ENCODE measurements at regions of chr4 and their contacts with region 1.

Region 1: DNA sequence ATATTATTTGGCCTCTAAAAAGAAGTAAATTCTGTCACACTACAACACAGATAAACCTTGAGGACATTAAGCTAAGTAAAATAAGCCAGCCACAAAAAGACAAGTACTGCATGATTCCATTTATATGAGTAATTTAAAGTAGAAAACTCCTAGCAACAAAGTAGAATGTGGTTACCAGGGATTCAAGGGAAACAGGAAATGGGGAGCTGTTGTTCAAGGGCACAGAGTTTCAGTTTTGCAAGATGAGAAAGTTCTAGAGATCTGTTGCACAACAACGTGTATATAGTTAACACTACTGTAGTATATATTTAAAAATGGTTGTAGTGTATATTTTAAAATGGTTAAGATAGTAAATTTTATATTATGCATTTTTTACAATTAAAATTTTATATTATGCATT is 25.4 kb downstream of the SEC31A start:
- DNase-seq: peak in 2 of 9 experiments; percentile 16 to 55
- ATAC-seq: no peak
- H3K4me3 ChIP-seq: no peak overlapping the region
- H3K4me3 Mint-ChIP-seq: peak overlapping the region; percentile 17
- H3K27ac ChIP-seq: peak overlapping the region in 1 of 2 experiments; percentile 37
- H3K27ac Mint-ChIP-seq: peak overlapping the region; percentile 62
- H3K4me1 ChIP-seq: peaks cover 6% of the 10 kb centered on the region
- H3K4me1 Mint-ChIP-seq: peaks cover 23% of the 10 kb centered on the region
- H3K27me3 ChIP-seq: no peaks in the 10 kb centered on the region
- H3K27me3 Mint-ChIP-seq: no peaks in the 10 kb centered on the region
- CTCF ChIP-seq: no peak

Region 2: GRCh38 chr4:82638479-82638878 is 227.1 kb before region 1 on chr4:
- CTCF ChIA-PET with region 1: no interaction called
- POLR2A ChIA-PET with region 1: no interaction called
- intact Hi-C with region 1: no loop called
- DNase-seq: no peak
- ATAC-seq: no peak
- H3K4me3 ChIP-seq: no peak overlapping the region
- H3K4me3 Mint-ChIP-seq: no peak overlapping the region
- H3K27ac ChIP-seq: no peak overlapping the region
- H3K27ac Mint-ChIP-seq: no peak overlapping the region
- H3K4me1 ChIP-seq: no peaks in the 10 kb centered on the region
- H3K4me1 Mint-ChIP-seq: no peaks in the 10 kb centered on the region
- H3K27me3 ChIP-seq: no peaks in the 10 kb centered on the region
- H3K27me3 Mint-ChIP-seq: no peaks in the 10 kb centered on the region
- CTCF ChIP-seq: no peak

Region 3: DNA sequence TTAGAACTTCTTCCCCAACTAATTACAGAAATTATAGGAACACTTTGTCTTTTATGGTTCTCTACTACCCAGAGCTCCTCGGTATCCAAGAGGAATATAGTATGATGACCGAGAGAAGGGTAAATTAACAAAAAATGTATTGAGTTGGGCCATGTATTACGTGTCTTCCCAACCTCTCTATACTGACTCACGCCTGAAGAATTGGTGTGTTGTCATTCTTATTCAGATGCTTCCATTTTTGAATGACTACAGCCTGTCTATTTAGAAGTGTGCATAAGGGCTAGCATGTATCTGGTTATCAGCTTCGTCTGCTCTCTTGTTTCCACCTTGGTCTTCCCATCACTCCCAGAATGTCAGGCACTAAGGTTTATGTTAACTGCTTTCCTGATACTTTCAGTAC is 42.5 kb before region 1 on chr4:
- CTCF ChIA-PET with region 1: no interaction called
- POLR2A ChIA-PET with region 1: no interaction called
- intact Hi-C with region 1: loop called in 1 of 2 experiments (anchors 10 kb)
- DNase-seq: no peak
- ATAC-seq: no peak
- H3K4me3 ChIP-seq: no peak overlapping the region
- H3K4me3 Mint-ChIP-seq: no peak overlapping the region
- H3K27ac ChIP-seq: no peak overlapping the region
- H3K27ac Mint-ChIP-seq: no peak overlapping the region
- H3K4me1 ChIP-seq: no peaks in the 10 kb centered on the region
- H3K4me1 Mint-ChIP-seq: no peaks in the 10 kb centered on the region
- H3K27me3 ChIP-seq: no peaks in the 10 kb centered on the region
- H3K27me3 Mint-ChIP-seq: no peaks in the 10 kb centered on the region
- CTCF ChIP-seq: no peak